ENCODE measurements at regions of chr17 and their contacts with region 1.

Region 1: DNA sequence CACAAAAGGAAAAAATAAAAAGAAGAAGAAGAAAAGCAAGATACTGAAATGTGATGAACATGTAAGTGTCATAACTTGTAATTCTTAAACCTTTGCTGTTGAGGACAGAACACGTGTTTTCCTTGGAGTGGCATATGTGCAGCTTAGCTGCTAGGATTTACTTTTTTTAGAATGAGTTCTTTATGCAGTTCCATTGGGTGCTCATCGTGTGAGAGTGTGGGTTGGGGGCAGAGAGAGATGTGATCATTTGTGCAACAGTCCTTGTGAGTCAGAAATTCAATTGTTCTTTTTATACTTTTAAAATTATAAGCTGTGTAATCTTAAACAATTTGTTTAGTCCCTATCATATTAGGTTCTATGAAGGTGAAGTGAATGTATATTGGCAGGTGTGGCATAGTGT is 5.5 kb upstream of the DHRS11 start:
- DNase-seq: no peak
- ATAC-seq: no peak
- H3K4me3 ChIP-seq: no peak overlapping the region
- H3K27ac ChIP-seq: no peak overlapping the region
- H3K4me1 ChIP-seq: peaks cover 4 to 13% of the 10 kb centered on the region in 2 experiments; a peak in 4 of 5 replicates
- H3K27me3 ChIP-seq: no peaks in the 10 kb centered on the region
- CTCF ChIP-seq: no peak
- EP300 ChIP-seq: no peak
- POLR2A ChIP-seq: no peak
- RAD21 ChIP-seq: no peak

Region 2: GRCh38 chr17:36601303-36602029 is 15.3 kb after region 1 on chr17 and contains the start of gene MRM1:
- CTCF ChIA-PET with region 1: no interaction called
- POLR2A ChIA-PET with region 1: interaction called, 32 read pairs
- in situ Hi-C with region 1: no loop called
- intact Hi-C with region 1: no loop called
- DNase-seq: peak; percentile 94 to 97 (median 94)
- ATAC-seq: peak; percentile 85
- H3K4me3 ChIP-seq: peak within 1 kb of the TSS; percentile 82
- H3K27ac ChIP-seq: peak within 1 kb of the TSS; percentile 98
- H3K4me1 ChIP-seq: peaks cover 57 to 66% of the 10 kb centered on the region in 2 experiments
- H3K27me3 ChIP-seq: no peaks in the 10 kb centered on the region
- CTCF ChIP-seq: peak; percentile 22 to 34 (median 30); a peak in 3 of 6 replicates
- EP300 ChIP-seq: no peak; the same call in 1 of the 2 replicates
- POLR2A ChIP-seq: peak; percentile 87
- RAD21 ChIP-seq: no peak
- polyA plus RNA-seq, gene MRM1: 0.61 to 1.4 TPM

Region 3: GRCh38 chr17:36674278-36674650 is 88.1 kb after region 1 on chr17:
- CTCF ChIA-PET with region 1: no interaction called
- POLR2A ChIA-PET with region 1: no interaction called
- in situ Hi-C with region 1: no loop called
- intact Hi-C with region 1: no loop called
- DNase-seq: no peak
- ATAC-seq: no peak
- H3K4me3 ChIP-seq: no peak overlapping the region
- H3K27ac ChIP-seq: no peak overlapping the region
- H3K4me1 ChIP-seq: no peaks in the 10 kb centered on the region
- H3K27me3 ChIP-seq: peaks cover 3 to 57% of the 10 kb centered on the region in 2 experiments
- CTCF ChIP-seq: no peak
- EP300 ChIP-seq: no peak
- POLR2A ChIP-seq: no peak
- RAD21 ChIP-seq: no peak

Measured in K562 (cell line).